A549 (cell line): ENCODE measurements at regions of chrX and their contacts with region 1.

Region 1: DNA sequence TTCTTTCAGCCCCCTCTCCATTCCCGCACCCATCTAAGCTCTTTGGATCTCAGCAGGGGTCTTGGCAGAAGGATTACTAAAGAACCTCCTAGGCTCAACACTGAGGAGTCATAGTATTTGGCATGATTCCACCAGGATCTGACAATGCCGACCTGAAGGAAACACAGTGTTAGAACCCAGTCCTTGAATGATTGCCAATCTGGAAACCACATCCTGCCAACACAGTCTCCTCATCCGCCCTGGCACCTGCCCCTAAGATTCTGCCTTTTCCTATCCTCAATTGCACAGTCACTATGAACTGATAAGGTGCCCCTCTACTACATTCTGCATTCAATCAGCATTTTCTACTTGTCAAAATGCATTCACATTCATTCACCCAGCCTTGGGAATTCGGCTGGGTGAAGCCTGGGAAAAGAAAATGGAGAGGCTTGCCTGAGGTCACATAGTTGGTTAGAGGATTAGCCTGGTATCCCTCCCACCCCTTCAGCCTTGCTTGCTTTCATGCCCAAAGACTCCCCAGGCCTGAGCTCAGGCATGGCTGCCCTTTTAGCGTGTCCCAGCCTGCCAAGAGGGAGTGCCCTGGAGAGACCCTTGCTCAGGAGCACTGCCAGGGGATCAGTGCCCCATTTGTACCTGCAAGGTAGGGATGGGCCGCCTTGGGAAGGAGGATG is 2.2 kb upstream of the CLDN2 start:
- DNase-seq: peak; percentile 60 to 84
- ATAC-seq: peak; percentile 80 to 87
- H3K4me3 ChIP-seq: no peak overlapping the region
- H3K27ac ChIP-seq: peak overlapping the region; percentile 92
- H3K4me1 ChIP-seq: peaks cover 70% of the 10 kb centered on the region
- CTCF ChIP-seq: no peak
- EP300 ChIP-seq: peak; percentile 90 to 94
- POLR2A ChIP-seq: no peak
- RAD21 ChIP-seq: peak in 1 of 2 experiments; percentile 35; a peak in 2 of 5 replicates

Region 2: DNA sequence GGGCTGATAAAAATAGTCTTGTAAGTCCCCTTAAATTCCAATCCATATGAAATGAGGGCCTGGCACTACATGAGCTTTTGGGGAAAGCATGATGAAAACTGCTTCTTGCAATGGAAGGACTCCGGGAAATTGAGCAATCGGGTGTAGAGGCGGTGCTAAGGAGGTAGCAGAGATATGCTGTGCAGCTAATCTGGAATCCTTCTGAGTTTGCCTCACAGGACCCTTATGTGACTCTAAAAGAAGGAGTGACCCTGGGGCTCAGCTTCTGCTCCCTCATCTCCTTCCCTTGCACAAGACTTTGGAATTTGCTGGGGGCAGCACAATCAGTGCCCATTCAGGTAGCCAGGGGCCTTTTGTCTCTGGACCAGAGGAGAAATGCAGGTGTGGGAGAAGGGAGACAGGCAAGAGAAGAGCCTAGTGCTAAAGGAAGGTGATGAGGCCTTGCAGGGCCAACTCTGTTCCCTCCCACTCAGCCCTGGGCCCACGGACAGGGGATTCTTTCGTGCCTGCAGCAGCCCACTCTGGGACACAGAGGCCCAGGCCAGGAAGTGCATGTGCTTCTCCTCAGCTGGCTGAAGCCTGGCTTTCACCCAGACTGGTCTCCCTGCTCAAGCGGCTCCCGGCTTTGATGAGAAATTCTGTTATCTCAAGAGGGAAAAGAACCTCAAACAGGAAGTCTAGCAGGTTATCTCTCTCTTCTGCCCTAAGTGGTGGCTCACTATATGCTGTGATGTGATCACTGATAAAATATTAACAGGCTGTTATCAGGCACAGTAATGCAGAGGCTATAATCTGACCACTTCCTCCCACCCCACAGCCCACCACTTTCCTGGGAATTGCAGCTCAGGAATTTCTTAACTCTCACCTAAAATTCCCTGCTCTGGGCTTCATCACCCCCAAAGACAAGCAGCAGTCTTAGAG is 15.3 kb after region 1 on chrX:
- CTCF ChIA-PET with region 1: interaction called, 7 read pairs
- POLR2A ChIA-PET with region 1: interaction called, 11 read pairs
- DNase-seq: peak; percentile 61 to 77
- ATAC-seq: peak; percentile 73 to 87
- H3K4me3 ChIP-seq: no peak overlapping the region
- H3K27ac ChIP-seq: peak overlapping the region; percentile 92 to 99
- H3K4me1 ChIP-seq: peaks cover 93% of the 10 kb centered on the region
- CTCF ChIP-seq: no peak
- EP300 ChIP-seq: peak; percentile 88 to 89; a peak in 4 of 5 replicates
- POLR2A ChIP-seq: no peak
- RAD21 ChIP-seq: no peak